CD4-positive, alpha-beta memory T cell (primary cell): ENCODE measurements at regions of chr9 and their contacts with region 1.

Region 1: DNA sequence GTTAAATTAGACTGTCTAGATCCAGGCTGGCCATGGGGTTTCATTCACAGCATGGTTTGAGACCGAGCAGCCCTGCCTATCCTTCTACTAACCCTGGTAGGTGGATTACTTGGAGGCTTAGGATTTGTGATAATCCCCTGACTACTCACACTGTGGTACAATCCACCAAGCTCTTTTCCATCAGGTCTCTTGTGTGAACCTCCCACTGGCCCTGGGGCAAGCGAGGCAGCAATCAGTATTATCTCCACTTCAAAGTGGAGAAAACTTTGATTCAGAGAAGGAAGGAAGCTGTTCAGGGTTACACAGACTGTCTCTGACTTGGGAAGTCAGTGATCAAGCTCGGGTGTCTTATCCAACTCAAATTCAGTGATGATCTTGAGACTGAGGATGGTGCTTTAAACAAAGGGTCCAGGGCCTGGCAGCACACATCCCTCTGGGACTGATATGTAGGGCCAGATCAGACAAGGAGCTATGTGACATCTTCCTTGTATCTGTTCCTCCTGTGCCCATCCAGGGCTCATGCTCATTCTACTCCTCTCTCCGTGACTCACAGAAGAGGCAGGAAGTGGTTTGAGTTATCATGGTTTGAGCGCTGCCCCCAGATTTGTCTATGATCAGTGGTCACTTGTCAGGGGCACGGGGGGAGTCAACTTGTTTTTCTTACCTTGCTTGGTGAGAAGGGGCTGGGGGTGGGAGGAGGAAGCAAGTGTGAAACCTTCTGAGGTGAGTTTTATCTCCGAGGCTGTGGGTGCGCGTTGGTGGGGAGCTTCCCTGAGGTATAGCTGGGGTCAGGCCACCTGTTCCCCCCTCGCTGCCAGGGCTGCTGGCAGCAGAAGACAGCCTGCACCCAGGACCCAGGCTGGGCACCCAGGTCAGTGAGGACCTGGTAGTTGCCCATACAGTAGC is 48.6 kb downstream of the RGS3 start:
- DNase-seq: peak; percentile 57 to 90 (median 62)
- H3K4me3 ChIP-seq: peak overlapping the region in 1 of 2 donors; percentile 21
- H3K4me3 Mint-ChIP-seq: peak overlapping the region; percentile 73 to 91 (median 84)
- H3K27ac ChIP-seq: peak overlapping the region; percentile 57
- H3K27ac Mint-ChIP-seq: peak overlapping the region; percentile 89 to 96 (median 93)
- H3K4me1 ChIP-seq: peaks cover 60% of the 10 kb centered on the region
- H3K4me1 Mint-ChIP-seq: peaks cover 39 to 68% (median 54%) of the 10 kb centered on the region in 4 donors
- H3K27me3 ChIP-seq: no peaks in the 10 kb centered on the region
- H3K27me3 Mint-ChIP-seq: no peaks in the 10 kb centered on the region

Region 2: GRCh38 chr9:113464672-113465271 is 47.3 kb before region 1 on chr9:
- CTCF ChIA-PET with region 1: no interaction called
- POLR2A ChIA-PET with region 1: no interaction called
- intact Hi-C with region 1: no loop called
- DNase-seq: no peak
- H3K4me3 ChIP-seq: no peak overlapping the region
- H3K4me3 Mint-ChIP-seq: no peak overlapping the region
- H3K27ac ChIP-seq: no peak overlapping the region
- H3K27ac Mint-ChIP-seq: peak overlapping the region in 1 of 7 donors; percentile 16
- H3K4me1 ChIP-seq: no peaks in the 10 kb centered on the region
- H3K4me1 Mint-ChIP-seq: peaks cover 0 to 2% (median 0%) of the 10 kb centered on the region in 4 donors
- H3K27me3 ChIP-seq: no peaks in the 10 kb centered on the region
- H3K27me3 Mint-ChIP-seq: no peaks in the 10 kb centered on the region

Region 3: DNA sequence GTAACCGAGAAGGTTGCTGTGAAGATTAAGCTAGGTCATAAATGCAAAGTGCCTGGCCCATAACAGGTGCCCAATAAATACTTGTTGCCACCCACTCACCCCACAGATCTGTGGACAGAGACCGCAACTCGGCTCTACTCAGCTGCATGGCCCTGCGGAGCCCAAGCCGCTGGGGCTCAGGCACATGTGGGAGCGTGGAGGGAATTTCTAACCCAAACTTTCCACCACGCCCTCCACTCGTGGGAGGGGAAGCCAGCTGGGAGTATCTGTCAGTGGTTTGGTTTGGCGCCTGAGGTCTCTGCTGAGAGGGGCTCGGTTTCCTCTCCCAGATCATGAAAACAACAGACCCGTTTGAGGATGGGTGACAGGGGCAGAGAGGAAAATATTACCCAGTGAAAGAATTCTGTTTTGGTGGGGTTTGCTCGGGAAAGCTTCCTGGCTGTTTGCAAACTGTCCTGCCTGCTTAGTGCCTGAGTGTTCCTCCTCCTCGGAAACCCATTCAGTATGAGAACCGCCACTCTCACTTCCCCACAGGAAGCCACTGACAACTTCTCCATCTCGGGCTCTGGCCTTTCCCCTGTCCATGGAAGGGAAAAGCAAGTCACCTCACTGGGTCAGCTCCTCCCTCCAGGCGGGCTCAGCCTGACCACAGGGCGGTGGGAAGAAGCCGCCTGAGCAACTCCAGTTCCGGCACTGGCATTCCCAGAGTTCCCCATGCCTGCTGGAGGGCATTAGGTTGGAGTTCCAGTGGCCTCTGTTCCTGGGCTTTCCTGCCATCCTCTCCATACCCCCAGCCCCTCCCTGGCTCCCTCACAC is 11.5 kb after region 1 on chr9:
- CTCF ChIA-PET with region 1: interaction called, 5 read pairs
- POLR2A ChIA-PET with region 1: interaction called, 62 read pairs
- intact Hi-C with region 1: loop called (anchors 1 kb)
- DNase-seq: peak in 4 of 5 donors; percentile 15 to 73 (median 26)
- H3K4me3 ChIP-seq: peak overlapping the region; percentile 3 to 38
- H3K4me3 Mint-ChIP-seq: peak overlapping the region; percentile 65 to 82 (median 76)
- H3K27ac ChIP-seq: peak overlapping the region; percentile 39
- H3K27ac Mint-ChIP-seq: peak overlapping the region; percentile 61 to 89 (median 88)
- H3K4me1 ChIP-seq: peaks cover 79% of the 10 kb centered on the region
- H3K4me1 Mint-ChIP-seq: peaks cover 61 to 89% (median 75%) of the 10 kb centered on the region in 4 donors
- H3K27me3 ChIP-seq: no peaks in the 10 kb centered on the region
- H3K27me3 Mint-ChIP-seq: no peaks in the 10 kb centered on the region